CD4-positive, alpha-beta T cell (primary cell): ENCODE measurements at regions of chr2 and their contacts with region 1.

Region 1: DNA sequence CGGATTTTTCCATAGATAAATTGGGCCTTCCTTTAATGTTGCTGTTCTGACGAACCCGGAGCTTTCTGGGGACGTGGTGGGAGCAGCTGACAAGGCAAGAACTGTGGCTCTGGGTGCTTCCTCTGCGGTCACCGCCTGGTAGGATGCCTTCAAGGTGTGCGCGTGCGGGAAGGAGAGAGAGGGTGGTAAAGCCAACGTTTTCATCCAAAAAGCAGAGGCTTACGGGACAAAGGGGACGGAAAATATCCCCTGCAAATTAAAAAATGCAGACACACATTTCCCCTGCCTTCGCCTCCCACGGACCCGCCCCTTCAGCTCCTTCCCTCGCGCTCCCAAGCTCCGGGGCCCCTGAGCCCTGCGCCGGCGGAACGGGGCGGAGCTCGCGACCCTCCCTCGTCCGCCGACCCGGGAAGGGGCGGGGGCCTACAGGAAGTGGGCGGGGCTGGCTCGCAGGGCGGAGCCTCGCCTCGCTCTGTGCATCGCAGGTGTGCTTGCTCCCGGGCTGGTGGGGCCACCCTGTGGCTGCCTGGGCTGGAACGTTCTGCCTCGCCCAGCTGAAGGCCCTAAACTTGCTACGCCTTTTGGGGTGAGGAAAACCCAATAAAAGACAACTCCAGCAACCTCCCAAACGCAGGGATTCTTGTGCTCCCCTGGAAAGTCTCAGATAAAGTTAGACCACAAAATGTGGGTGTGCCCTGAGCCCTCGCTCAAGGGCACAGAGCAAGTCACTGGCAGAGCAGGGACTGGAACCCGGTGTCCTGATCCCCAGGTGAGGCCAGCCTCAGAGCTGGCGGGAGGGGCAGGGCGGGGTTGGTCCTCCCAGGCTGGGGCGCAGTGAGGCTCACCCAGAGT is 25.4 kb upstream of the SLC66A3 start:
- DNase-seq: peak; percentile 71 to 94 (median 86)
- ATAC-seq: peak; percentile 91
- H3K4me3 ChIP-seq: peak overlapping the region; percentile 51
- H3K4me3 Mint-ChIP-seq: peak overlapping the region; percentile 77
- H3K27ac ChIP-seq: peak overlapping the region; percentile 51 to 74
- H3K27ac Mint-ChIP-seq: peak overlapping the region; percentile 76
- H3K4me1 ChIP-seq: peaks cover 54% of the 10 kb centered on the region
- H3K4me1 Mint-ChIP-seq: peaks cover 46% of the 10 kb centered on the region
- H3K27me3 ChIP-seq: no peaks in the 10 kb centered on the region
- H3K27me3 Mint-ChIP-seq: no peaks in the 10 kb centered on the region
- CTCF ChIP-seq: peak; percentile 69

Region 2: GRCh38 chr2:10812362-10813162 is 317.3 kb before region 1 on chr2 and contains the start of gene PDIA6:
- CTCF ChIA-PET with region 1: interaction called, 4 read pairs
- POLR2A ChIA-PET with region 1: interaction called, 11 read pairs
- intact Hi-C with region 1: loop called in 1 of 2 experiments (anchors 5 kb)
- DNase-seq: peak; percentile 89 to 96 (median 92)
- ATAC-seq: peak; percentile 90
- H3K4me3 ChIP-seq: peak within 1 kb of the TSS; percentile 70
- H3K4me3 Mint-ChIP-seq: peak within 1 kb of the TSS; percentile 93
- H3K27ac ChIP-seq: peak within 1 kb of the TSS in 1 of 2 donors; percentile 31
- H3K27ac Mint-ChIP-seq: peak within 1 kb of the TSS; percentile 90
- H3K4me1 ChIP-seq: peaks cover 32% of the 10 kb centered on the region
- H3K4me1 Mint-ChIP-seq: peaks cover 34% of the 10 kb centered on the region
- H3K27me3 ChIP-seq: no peaks in the 10 kb centered on the region
- H3K27me3 Mint-ChIP-seq: peaks cover 2% of the 10 kb centered on the region
- CTCF ChIP-seq: no peak
- total RNA-seq, gene PDIA6: 25.5 to 26.3 TPM

Region 3: GRCh38 chr2:11154923-11155380 is 25.1 kb after region 1 on chr2:
- CTCF ChIA-PET with region 1: interaction called, 10 read pairs
- POLR2A ChIA-PET with region 1: interaction called, 64 read pairs
- intact Hi-C with region 1: loop called (anchors 1 kb)
- DNase-seq: peak; percentile 97 to 99 (median 99)
- ATAC-seq: peak; percentile 89
- H3K4me3 ChIP-seq: peak overlapping the region; percentile 60
- H3K4me3 Mint-ChIP-seq: peak overlapping the region; percentile 92
- H3K27ac ChIP-seq: peak overlapping the region; percentile 74 to 78
- H3K27ac Mint-ChIP-seq: peak overlapping the region; percentile 90
- H3K4me1 ChIP-seq: peaks cover 34% of the 10 kb centered on the region
- H3K4me1 Mint-ChIP-seq: peaks cover 24% of the 10 kb centered on the region
- H3K27me3 ChIP-seq: no peaks in the 10 kb centered on the region
- H3K27me3 Mint-ChIP-seq: no peaks in the 10 kb centered on the region
- CTCF ChIP-seq: no peak

Region 4: GRCh38 chr2:11254100-11254536 is 124.3 kb after region 1 on chr2:
- CTCF ChIA-PET with region 1: no interaction called
- POLR2A ChIA-PET with region 1: no interaction called
- intact Hi-C with region 1: no loop called
- DNase-seq: no peak
- ATAC-seq: no peak
- H3K4me3 ChIP-seq: no peak overlapping the region
- H3K4me3 Mint-ChIP-seq: no peak overlapping the region
- H3K27ac ChIP-seq: no peak overlapping the region
- H3K27ac Mint-ChIP-seq: no peak overlapping the region
- H3K4me1 ChIP-seq: no peaks in the 10 kb centered on the region
- H3K4me1 Mint-ChIP-seq: peaks cover 25% of the 10 kb centered on the region
- H3K27me3 ChIP-seq: no peaks in the 10 kb centered on the region
- H3K27me3 Mint-ChIP-seq: no peaks in the 10 kb centered on the region
- CTCF ChIP-seq: no peak

Region 5: DNA sequence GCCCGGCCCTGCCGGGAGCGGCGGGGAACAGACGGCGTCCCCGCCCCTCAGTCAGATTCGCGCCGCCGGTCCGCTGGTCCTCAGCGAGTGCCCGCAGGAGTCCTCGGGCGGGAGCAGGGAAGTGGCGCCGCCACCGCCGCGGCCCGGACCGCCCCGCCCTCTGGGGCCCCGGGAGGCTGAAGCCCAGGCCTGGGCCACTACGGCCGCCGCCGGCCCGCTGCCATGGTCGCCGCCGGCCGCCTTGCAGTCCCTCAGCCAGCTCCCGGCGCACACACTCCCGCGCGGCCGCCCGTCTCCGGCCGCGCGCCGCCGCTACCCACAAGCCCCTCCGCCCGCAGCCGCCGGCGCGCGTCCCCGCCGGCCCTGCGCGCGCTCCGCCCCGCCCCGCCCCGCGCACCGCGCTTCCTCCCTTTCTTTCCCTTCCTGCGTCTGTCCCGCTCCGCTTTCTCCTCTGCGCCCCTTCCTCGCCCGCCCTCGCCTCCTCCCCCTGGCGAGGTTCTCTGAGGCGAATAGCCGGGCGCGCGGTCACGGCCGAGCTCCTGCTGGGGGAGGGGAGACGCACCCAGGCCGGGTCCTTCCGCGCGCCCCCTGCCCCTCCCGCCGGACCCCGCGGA is 214.6 kb after region 1 on chr2 and contains the start of gene ROCK2:
- CTCF ChIA-PET with region 1: interaction called, 10 read pairs
- POLR2A ChIA-PET with region 1: interaction called, 7 read pairs
- intact Hi-C with region 1: loop called in 1 of 2 experiments (anchors 5 kb)
- DNase-seq: peak; percentile 42 to 83 (median 59)
- ATAC-seq: peak; percentile 68
- H3K4me3 ChIP-seq: peak within 1 kb of the TSS; percentile 88
- H3K4me3 Mint-ChIP-seq: peak within 1 kb of the TSS; percentile 98
- H3K27ac ChIP-seq: peak within 1 kb of the TSS; percentile 7 to 42
- H3K27ac Mint-ChIP-seq: peak within 1 kb of the TSS; percentile 88
- H3K4me1 ChIP-seq: peaks cover 16% of the 10 kb centered on the region
- H3K4me1 Mint-ChIP-seq: peaks cover 44% of the 10 kb centered on the region
- H3K27me3 ChIP-seq: no peaks in the 10 kb centered on the region
- H3K27me3 Mint-ChIP-seq: no peaks in the 10 kb centered on the region
- CTCF ChIP-seq: no peak
- total RNA-seq, gene ROCK2: 6.9 to 9.4 TPM

Region 6: DNA sequence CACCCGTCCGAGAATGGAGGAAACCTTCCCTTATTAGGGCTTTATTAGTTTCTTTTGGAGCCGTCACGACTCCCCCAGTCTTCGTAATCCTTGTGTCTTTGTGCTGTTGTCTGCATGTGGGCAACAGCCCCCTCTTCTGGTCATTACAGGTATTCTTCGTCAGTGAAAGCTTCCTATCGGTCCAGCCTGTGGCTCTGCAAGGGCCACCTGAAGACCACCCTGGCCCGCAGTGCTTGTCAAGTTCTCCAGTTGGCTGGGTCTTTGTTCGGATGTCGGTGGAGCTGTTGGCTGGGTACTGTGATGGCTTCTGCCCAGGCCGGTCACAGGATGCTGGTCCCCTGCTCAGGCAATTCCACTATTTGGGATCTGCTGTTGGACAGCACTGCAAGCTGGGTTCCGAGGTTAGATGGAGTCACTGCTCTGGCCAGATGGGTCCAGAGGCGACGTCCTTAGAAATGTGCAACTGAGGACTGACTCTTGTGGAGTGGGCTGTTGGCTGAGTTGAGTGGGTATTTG is 317.0 kb after region 1 on chr2:
- CTCF ChIA-PET with region 1: interaction called, 10 read pairs
- POLR2A ChIA-PET with region 1: no interaction called
- intact Hi-C with region 1: loop called (anchors 1 kb)
- DNase-seq: peak; percentile 19 to 75 (median 34)
- ATAC-seq: peak; percentile 74
- H3K4me3 ChIP-seq: no peak overlapping the region
- H3K4me3 Mint-ChIP-seq: no peak overlapping the region
- H3K27ac ChIP-seq: no peak overlapping the region
- H3K27ac Mint-ChIP-seq: no peak overlapping the region
- H3K4me1 ChIP-seq: no peaks in the 10 kb centered on the region
- H3K4me1 Mint-ChIP-seq: no peaks in the 10 kb centered on the region
- H3K27me3 ChIP-seq: no peaks in the 10 kb centered on the region
- H3K27me3 Mint-ChIP-seq: no peaks in the 10 kb centered on the region
- CTCF ChIP-seq: peak; percentile 80

Region 7: DNA sequence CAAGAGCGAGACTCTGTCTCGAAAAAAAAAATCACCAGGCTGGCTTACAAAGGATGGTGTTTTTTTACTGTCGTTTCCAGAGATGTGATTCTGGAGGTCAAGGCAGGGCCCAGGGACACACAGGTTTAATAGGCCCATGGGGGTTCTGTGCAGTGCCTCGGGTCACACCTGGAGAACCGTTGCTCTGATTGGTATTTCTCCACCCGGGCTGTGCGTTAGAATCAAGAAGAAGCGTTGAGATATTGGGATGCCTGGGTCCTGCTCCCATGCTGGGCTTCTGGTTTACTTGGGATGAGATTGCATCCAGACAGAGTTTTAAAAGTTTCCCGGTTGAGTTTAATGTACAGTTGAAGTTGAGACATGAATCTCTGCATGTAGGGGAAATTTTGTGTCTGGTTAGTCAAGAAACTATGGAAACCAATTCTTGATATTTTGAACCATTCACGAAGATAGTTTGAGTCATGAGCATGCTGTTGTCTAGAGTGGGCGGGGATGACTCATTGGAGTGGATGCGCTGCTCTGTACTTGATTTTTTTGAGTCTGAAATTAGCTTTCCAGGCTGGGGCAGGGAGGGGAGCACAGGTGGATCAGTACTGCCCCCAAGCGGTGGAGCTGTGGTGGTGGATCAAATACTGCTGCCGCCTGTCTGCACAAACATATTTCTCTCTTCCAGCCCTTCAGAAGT is 454.2 kb after region 1 on chr2:
- CTCF ChIA-PET with region 1: interaction called, 8 read pairs
- POLR2A ChIA-PET with region 1: interaction called, 3 read pairs
- intact Hi-C with region 1: loop called in 1 of 2 experiments (anchors 1 kb)
- DNase-seq: peak; percentile 25 to 72 (median 41)
- ATAC-seq: peak; percentile 81
- H3K4me3 ChIP-seq: no peak overlapping the region
- H3K4me3 Mint-ChIP-seq: no peak overlapping the region
- H3K27ac ChIP-seq: no peak overlapping the region
- H3K27ac Mint-ChIP-seq: no peak overlapping the region
- H3K4me1 ChIP-seq: no peaks in the 10 kb centered on the region
- H3K4me1 Mint-ChIP-seq: no peaks in the 10 kb centered on the region
- H3K27me3 ChIP-seq: no peaks in the 10 kb centered on the region
- H3K27me3 Mint-ChIP-seq: peaks cover 5% of the 10 kb centered on the region
- CTCF ChIP-seq: peak; percentile 35

Region 8: GRCh38 chr2:11753886-11754699 is 624.3 kb after region 1 on chr2:
- CTCF ChIA-PET with region 1: no interaction called
- POLR2A ChIA-PET with region 1: no interaction called
- intact Hi-C with region 1: loop called in 1 of 2 experiments (anchors 10 kb)
- DNase-seq: peak; percentile 44 to 86 (median 60)
- ATAC-seq: peak; percentile 47
- H3K4me3 ChIP-seq: peak overlapping the region; percentile 37
- H3K4me3 Mint-ChIP-seq: peak overlapping the region; percentile 80
- H3K27ac ChIP-seq: peak overlapping the region; percentile 80 to 94
- H3K27ac Mint-ChIP-seq: peak overlapping the region; percentile 92
- H3K4me1 ChIP-seq: peaks cover 71% of the 10 kb centered on the region
- H3K4me1 Mint-ChIP-seq: peaks cover 86% of the 10 kb centered on the region
- H3K27me3 ChIP-seq: no peaks in the 10 kb centered on the region
- H3K27me3 Mint-ChIP-seq: no peaks in the 10 kb centered on the region
- CTCF ChIP-seq: no peak